ENCODE measurements at regions of chr16 and their contacts with region 1.

Region 1: DNA sequence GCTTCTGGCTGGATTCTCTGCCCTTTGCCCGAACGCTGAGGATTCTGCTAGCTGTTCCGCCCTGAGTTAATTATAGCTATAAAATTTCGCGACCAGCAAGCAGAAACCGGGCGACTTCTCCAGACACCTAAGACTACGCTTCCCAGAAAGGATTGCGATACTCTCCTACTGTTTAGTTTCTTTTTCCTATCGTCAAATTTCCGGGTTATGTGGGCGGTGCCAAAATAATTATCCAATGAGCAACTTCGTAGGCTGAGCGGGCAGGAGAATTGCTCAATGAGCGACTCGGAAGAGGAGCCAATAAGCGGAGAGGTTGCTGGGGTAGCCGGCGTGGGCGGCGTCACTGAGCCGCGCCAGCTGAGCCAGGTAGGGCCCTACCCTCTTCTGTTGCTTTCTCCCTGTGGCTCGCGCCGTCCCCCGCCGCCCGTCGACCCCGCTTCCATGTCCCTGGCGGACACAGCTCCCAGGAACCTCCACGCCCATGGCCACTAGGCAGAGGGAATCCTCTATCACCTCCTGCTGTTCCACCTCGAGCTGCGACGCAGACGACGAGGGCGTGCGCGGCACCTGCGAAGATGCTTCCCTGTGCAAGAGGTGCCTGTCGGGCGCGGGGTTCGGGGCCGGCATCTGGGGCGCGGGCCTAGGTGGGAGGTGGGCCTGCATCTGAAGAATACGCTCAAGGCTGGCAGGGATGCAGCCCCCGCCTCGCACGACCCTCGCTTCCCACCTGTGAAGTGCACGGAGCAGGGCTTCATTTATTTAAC is at the start of gene LCMT1:
- DNase-seq: peak; percentile 96
- H3K4me3 Mint-ChIP-seq: peak within 1 kb of the TSS; percentile 95
- H3K27ac Mint-ChIP-seq: peak within 1 kb of the TSS; percentile 94
- H3K4me1 Mint-ChIP-seq: peaks cover 58% of the 10 kb centered on the region
- H3K27me3 Mint-ChIP-seq: no peaks in the 10 kb centered on the region
- total RNA-seq, gene LCMT1: 47.2 to 50.1 TPM

Region 2: GRCh38 chr16:24721830-24722238 is 389.8 kb before region 1 on chr16:
- CTCF ChIA-PET with region 1: no interaction called
- POLR2A ChIA-PET with region 1: no interaction called
- intact Hi-C with region 1: loop called (anchors 5 kb)
- DNase-seq: peak; percentile 86
- H3K4me3 Mint-ChIP-seq: peak overlapping the region; percentile 14
- H3K27ac Mint-ChIP-seq: peak overlapping the region; percentile 48
- H3K4me1 Mint-ChIP-seq: peaks cover 38% of the 10 kb centered on the region
- H3K27me3 Mint-ChIP-seq: peaks cover 6% of the 10 kb centered on the region

Region 3: GRCh38 chr16:24858219-24859041 is 253.2 kb before region 1 on chr16:
- CTCF ChIA-PET with region 1: no interaction called
- POLR2A ChIA-PET with region 1: no interaction called
- intact Hi-C with region 1: loop called (anchors 5 kb)
- DNase-seq: peak; percentile 67
- H3K4me3 Mint-ChIP-seq: no peak overlapping the region
- H3K27ac Mint-ChIP-seq: no peak overlapping the region
- H3K4me1 Mint-ChIP-seq: no peaks in the 10 kb centered on the region
- H3K27me3 Mint-ChIP-seq: peaks cover 10% of the 10 kb centered on the region

Region 4: DNA sequence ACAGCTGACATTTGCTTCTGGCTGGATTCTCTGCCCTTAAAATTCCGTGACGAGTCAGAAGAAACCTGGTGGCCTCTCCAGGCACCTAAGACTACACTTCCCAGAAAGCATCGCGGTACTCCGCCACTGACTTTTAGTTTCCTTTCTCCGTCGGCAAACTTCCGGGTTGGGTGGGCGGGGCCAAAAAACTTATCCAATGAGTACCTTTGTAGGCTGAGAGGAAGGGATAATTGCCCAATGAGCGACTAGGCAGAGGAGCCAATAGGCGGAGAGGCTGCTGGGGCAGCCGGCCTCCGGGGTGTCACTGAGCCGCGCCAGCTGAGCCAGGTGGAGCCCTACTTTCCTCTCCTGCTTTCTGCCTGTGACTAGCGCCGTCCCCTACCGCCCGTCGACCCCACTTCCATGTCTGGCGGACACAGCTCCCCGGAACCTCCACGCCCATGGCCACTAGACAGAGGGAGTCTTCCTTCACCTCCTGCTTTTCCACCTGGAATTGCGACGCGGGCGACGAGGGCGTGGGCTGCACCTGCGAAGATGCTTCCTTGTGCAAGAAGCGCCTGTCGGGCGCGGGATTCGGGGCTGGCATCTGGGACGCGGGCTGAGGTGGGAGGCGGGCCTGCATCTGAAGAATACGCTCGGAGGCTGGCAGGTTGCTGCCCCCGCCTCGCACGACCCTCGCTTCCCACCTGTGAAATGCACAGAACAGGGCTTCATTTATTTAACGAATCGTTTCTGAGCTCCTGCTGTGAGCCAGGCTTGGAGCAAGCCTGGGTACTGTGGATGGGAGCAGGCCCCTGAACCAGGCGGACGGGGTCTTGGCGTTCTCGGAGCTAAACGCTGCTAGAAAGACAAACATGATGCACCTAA is 79.9 kb before region 1 on chr16:
- CTCF ChIA-PET with region 1: no interaction called
- POLR2A ChIA-PET with region 1: interaction called, 6 read pairs
- intact Hi-C with region 1: loop called (anchors 1 kb)
- DNase-seq: peak; percentile 94
- H3K4me3 Mint-ChIP-seq: peak overlapping the region; percentile 92
- H3K27ac Mint-ChIP-seq: peak overlapping the region; percentile 91
- H3K4me1 Mint-ChIP-seq: peaks cover 34% of the 10 kb centered on the region
- H3K27me3 Mint-ChIP-seq: no peaks in the 10 kb centered on the region

Region 5: GRCh38 chr16:25051406-25052150 is 60.0 kb before region 1 on chr16:
- CTCF ChIA-PET with region 1: interaction called, 22 read pairs
- POLR2A ChIA-PET with region 1: interaction called, 3 read pairs
- intact Hi-C with region 1: loop called (anchors 1 kb)
- DNase-seq: no peak
- H3K4me3 Mint-ChIP-seq: peak overlapping the region; percentile 54
- H3K27ac Mint-ChIP-seq: peak overlapping the region; percentile 74
- H3K4me1 Mint-ChIP-seq: peaks cover 47% of the 10 kb centered on the region
- H3K27me3 Mint-ChIP-seq: no peaks in the 10 kb centered on the region

Region 6: DNA sequence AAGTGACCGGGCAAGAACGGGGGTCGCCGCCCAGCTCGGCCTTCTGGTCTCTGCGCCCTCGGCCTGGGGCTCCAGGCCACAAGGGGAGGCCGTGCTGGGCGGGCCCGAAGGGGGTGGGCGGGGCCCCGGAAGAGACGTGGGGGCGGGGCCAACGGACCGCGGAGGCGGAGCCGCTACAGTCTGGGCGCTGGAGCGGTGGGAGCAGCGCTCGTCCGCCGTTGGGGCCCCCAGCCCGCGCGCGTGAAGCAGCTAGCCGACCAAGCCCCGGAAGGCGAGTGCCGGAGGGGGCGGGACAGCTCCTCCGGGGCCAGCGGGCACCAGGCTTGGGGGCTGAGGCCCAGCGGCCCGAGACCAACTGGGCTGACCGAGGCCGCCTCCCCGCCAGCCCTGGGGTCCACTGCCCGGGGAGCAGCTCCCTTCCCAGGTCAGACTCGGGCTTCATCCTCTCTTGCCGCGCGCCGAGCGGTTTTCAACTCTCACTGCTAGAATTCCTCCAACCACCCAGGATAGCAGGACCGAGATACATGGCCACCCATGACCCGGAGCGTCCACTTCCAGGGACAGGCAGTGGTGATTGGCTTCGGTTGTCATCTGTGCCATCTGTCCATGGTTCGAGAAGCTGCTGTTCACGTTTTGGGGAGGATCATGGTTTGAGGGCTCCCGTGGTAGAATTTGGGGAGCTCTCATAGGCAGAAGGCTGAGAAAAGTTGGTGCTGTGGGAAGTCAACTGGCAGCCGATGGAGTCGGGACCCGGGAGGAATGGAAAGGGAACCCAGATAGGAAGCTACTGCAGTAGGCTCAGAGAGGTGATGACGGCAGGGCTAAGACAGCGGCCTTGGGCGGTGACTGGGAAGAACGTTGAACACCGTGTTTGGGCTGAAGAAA is 44.6 kb before region 1 on chr16:
- CTCF ChIA-PET with region 1: interaction called, 3 read pairs
- POLR2A ChIA-PET with region 1: interaction called, 8 read pairs
- intact Hi-C with region 1: loop called (anchors 2 kb)
- DNase-seq: peak; percentile 92
- H3K4me3 Mint-ChIP-seq: peak overlapping the region; percentile 83
- H3K27ac Mint-ChIP-seq: peak overlapping the region; percentile 77
- H3K4me1 Mint-ChIP-seq: peaks cover 27% of the 10 kb centered on the region
- H3K27me3 Mint-ChIP-seq: no peaks in the 10 kb centered on the region

Region 7: GRCh38 chr16:25093208-25094061 is 18.1 kb before region 1 on chr16:
- CTCF ChIA-PET with region 1: no interaction called
- POLR2A ChIA-PET with region 1: interaction called, 4 read pairs
- intact Hi-C with region 1: loop called (anchors 1 kb)
- DNase-seq: peak; percentile 31
- H3K4me3 Mint-ChIP-seq: peak overlapping the region; percentile 14
- H3K27ac Mint-ChIP-seq: peak overlapping the region; percentile 68
- H3K4me1 Mint-ChIP-seq: peaks cover 22% of the 10 kb centered on the region
- H3K27me3 Mint-ChIP-seq: no peaks in the 10 kb centered on the region